ENCODE measurements at regions of chr7 and their contacts with region 1.

Region 1: GRCh38 chr7:151315038-151315655 is 26.5 kb upstream of the NUB1 start:
- DNase-seq: peak in 1 of 2 donors; percentile 40
- ATAC-seq: peak; percentile 73 to 89 (median 79)
- H3K4me3 ChIP-seq: no peak overlapping the region
- H3K27ac ChIP-seq: no peak overlapping the region
- H3K4me1 ChIP-seq: no peaks in the 10 kb centered on the region
- H3K27me3 ChIP-seq: no peaks in the 10 kb centered on the region
- CTCF ChIP-seq: peak; percentile 85

Region 2: DNA sequence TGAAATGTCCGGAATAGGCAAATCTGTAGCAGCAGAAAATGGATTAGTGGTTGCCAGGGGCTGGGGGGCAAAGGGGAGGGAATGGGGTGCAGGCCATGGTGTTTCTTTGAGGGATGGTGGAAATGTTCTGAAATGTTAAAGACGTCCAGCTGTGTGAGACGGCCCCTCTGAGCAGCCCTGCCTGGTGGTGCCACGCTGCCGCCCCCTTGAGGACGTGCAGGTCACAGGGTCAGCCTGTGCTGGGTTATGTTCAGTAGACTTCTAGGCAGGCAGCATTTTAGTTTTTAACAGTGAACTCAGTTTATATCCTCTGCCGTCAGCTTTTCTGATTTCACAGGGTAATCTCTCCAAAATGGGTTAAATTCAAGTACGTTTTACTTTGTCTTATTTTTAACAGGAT is 35.9 kb after region 1 on chr7:
- intact Hi-C with region 1: loop called (anchors 1 to 2 kb)
- DNase-seq: no peak
- ATAC-seq: peak in 1 of 4 donors; percentile 39
- H3K4me3 ChIP-seq: no peak overlapping the region
- H3K27ac ChIP-seq: no peak overlapping the region
- H3K4me1 ChIP-seq: peaks cover 8% of the 10 kb centered on the region
- H3K27me3 ChIP-seq: no peaks in the 10 kb centered on the region
- CTCF ChIP-seq: no peak

Region 3: GRCh38 chr7:151368136-151368571 is 53.0 kb after region 1 on chr7:
- intact Hi-C with region 1: no loop called
- DNase-seq: peak; percentile 81 to 91
- ATAC-seq: peak; percentile 96 to 99 (median 98)
- H3K4me3 ChIP-seq: no peak overlapping the region
- H3K27ac ChIP-seq: no peak overlapping the region
- H3K4me1 ChIP-seq: peaks cover 4% of the 10 kb centered on the region
- H3K27me3 ChIP-seq: no peaks in the 10 kb centered on the region
- CTCF ChIP-seq: peak; percentile 95

Region 4: DNA sequence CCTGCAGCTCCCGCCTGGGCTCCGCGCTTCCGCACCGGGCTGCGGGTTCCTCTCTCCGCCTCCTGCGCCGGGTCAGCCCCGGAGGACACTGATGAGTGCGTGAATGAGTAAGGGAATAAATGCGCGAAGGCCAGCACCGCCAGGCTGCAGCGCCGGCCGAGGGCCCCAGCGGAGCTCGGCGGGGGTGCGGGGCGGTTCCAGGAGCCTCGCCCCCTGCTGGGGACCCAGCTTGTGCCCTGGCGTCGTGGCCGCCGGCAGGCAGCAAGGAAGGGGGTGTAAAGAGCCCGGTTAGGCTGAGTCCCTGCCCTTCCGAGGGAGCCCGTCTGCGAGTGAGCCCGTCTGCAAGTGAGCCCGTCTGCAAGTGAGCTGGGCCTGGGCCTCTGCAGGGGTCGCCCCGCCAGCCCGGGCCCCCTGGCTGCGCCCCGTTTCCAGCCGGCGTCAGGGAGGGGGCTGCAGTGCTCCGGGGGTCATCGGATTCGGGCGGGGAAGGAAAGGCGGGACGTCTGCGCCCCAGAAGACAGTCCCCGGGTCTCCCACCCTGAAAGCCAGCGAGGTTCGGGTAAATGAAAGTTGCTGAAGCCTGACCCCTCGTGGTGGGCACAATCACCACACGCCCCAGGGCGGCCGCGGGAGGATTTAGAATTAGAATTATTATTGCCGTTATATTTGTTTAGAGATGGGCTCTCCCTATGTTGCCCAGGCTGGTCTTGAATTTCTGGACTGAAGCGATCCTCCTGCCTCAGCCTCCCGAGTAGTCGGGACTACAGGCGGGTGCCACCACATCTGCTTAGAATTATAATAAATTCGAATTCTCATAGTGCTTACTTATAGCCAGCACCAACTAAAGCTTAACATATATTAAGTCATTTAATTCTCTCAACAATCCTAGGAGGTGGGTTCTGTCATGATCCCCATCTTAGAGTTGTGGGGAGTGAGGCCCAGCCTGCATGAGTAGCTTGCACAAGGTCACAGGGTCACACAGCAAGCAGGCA is 133.4 kb after region 1 on chr7:
- intact Hi-C with region 1: loop called in 1 of 2 experiments (anchors 5 kb)
- DNase-seq: peak; percentile 74 to 80
- ATAC-seq: peak; percentile 68 to 93 (median 83)
- H3K4me3 ChIP-seq: peak overlapping the region; percentile 70
- H3K27ac ChIP-seq: no peak overlapping the region
- H3K4me1 ChIP-seq: no peaks in the 10 kb centered on the region
- H3K27me3 ChIP-seq: no peaks in the 10 kb centered on the region
- CTCF ChIP-seq: peak; percentile 73

Measured in psoas muscle (tissue), 8 donors.